Sigmoid colon (tissue), 7 donors: ENCODE measurements at regions of chr10 and their contacts with region 1.

Region 1: GRCh38 chr10:78211561-78212051 is 177.9 kb downstream of the RPS24 start:
- DNase-seq: no peak
- H3K4me3 ChIP-seq: no peak overlapping the region
- H3K27ac ChIP-seq: peak overlapping the region; percentile 41 to 64 (median 44)
- H3K4me1 ChIP-seq: peaks cover 0 to 39% (median 33%) of the 10 kb centered on the region in 4 donors
- H3K27me3 ChIP-seq: no peaks in the 10 kb centered on the region
- CTCF ChIP-seq: peak in 3 of 4 experiments; percentile 37 to 53 (median 50)
- EP300 ChIP-seq: no peak
- POLR2A ChIP-seq: no peak

Region 2: DNA sequence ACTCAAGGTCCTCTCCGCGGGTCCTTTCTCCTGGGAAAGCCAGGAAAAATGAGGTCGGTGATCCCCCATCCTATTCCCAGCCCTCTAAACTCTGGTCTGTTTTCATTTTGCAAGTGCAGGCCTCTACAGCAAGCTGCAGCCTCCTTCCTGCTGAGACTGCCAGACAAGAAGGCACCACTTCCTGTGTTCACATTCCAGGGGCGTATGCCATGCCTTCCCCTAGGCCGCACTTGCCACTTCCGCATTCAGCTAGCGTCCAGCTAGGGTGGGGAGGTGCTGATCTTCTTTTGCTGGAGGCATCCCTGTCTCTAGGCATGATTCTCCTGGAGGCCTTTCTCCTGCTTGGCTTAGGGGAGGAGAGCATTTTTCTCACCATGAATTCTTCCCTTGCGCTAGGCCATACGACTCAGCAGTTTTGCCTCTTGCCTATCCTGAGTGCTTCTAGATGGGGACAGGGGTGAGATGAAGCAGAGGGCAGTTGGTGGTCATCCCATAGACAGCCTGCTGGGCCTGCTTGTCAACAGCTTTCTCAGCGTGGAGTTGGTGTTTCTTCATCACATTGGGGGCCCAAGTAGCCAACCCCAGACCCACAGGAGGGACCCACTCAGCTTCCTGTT is 150.9 kb after region 1 on chr10:
- intact Hi-C with region 1: no loop called
- DNase-seq: no peak
- H3K4me3 ChIP-seq: no peak overlapping the region
- H3K27ac ChIP-seq: no peak overlapping the region
- H3K4me1 ChIP-seq: peaks cover 0 to 37% (median 26%) of the 10 kb centered on the region in 4 donors
- H3K27me3 ChIP-seq: no peaks in the 10 kb centered on the region
- CTCF ChIP-seq: no peak
- EP300 ChIP-seq: no peak
- POLR2A ChIP-seq: no peak

Region 3: DNA sequence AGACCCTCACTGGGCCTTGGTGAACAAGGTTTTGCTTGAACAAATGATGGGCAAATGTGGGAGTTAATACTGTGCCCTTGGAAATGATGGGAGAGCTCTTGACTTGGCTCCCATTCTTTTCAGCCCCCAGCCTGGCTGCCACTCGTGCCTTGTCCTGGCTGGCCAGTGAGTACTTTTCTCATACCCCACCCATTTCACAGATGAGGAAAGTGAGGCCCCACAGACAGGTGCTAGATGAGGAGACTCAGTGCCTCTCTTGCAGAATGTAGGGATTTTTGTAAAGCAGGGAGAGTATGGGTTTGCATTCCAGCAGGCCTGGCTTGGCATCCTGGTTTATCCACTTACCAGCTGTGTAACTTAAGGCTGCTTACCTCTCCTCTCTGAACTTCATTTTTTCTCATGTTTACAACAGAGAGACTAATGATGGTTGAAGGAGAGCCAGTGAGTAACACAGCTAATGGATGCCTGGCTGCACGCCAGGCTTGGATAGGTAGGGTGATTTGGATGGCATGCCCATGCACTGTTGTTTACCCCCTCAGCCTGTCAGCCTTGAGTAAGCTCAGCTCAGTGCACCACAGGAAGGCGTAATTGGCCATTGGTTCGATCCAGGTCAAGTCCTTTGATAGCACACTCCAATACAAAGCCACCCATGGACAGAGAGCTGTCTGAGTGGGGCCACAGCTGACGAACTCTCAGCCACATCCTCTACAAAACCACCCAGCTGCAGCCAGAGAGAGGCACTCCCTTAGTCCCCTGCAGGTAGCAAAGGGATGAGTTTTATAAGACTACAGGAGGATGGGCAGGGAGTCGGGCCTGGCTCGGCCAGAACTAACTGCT is 258.9 kb after region 1 on chr10:
- intact Hi-C with region 1: no loop called
- DNase-seq: no peak
- H3K4me3 ChIP-seq: no peak overlapping the region
- H3K27ac ChIP-seq: peak overlapping the region in 3 of 4 donors; percentile 79 to 90 (median 84)
- H3K4me1 ChIP-seq: peaks cover 0 to 38% (median 35%) of the 10 kb centered on the region in 4 donors
- H3K27me3 ChIP-seq: no peaks in the 10 kb centered on the region
- CTCF ChIP-seq: no peak
- EP300 ChIP-seq: no peak
- POLR2A ChIP-seq: no peak

Region 4: DNA sequence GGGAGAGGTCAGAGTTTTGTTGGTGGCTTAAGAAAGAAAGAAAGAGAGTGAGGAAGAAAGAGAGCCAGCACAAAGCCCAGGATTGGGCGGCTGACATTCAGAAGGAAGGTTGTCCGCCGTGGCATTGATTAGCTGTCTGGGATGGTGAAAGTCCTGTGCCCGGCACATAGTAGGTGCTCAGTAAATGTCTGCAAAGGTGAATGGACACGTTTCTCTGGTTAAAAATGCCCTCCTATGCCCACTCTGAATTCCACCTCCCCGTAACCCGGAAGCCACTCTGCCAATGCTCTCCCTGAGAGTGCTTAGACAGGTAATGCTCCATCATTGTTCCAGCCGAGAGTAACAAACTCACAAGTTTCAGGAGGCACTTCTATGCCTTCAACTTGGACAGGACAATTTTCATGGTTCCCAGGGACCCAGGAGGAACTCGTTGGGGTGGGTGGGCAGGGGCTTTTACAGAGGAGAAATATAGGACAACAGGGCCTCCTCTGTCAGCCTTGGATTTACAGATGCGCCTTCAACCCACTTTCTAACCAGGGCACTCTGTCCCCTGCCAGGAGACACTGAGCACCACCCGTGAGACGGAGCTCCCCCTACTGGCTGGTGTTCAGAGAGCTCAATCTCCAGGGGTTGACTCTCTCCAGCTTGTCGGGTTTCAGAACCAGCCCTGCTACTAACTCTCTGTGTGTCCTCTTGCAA is 445.7 kb after region 1 on chr10:
- intact Hi-C with region 1: loop called (anchors 2 kb)
- DNase-seq: peak; percentile 91
- H3K4me3 ChIP-seq: no peak overlapping the region
- H3K27ac ChIP-seq: peak overlapping the region in 3 of 4 donors; percentile 61 to 73 (median 70)
- H3K4me1 ChIP-seq: peaks cover 0 to 39% (median 18%) of the 10 kb centered on the region in 4 donors
- H3K27me3 ChIP-seq: no peaks in the 10 kb centered on the region
- CTCF ChIP-seq: peak; percentile 46 to 74 (median 60)
- EP300 ChIP-seq: no peak
- POLR2A ChIP-seq: no peak

Region 5: GRCh38 chr10:78756604-78757349 is 545.2 kb after region 1 on chr10:
- intact Hi-C with region 1: loop called (anchors 5 kb)
- DNase-seq: peak; percentile 95
- H3K4me3 ChIP-seq: no peak overlapping the region
- H3K27ac ChIP-seq: peak overlapping the region; percentile 45 to 74 (median 68)
- H3K4me1 ChIP-seq: peaks cover 0 to 23% (median 18%) of the 10 kb centered on the region in 4 donors
- H3K27me3 ChIP-seq: no peaks in the 10 kb centered on the region
- CTCF ChIP-seq: no peak
- EP300 ChIP-seq: peak in 2 of 4 donors; percentile 61 to 78
- POLR2A ChIP-seq: no peak

Region 6: DNA sequence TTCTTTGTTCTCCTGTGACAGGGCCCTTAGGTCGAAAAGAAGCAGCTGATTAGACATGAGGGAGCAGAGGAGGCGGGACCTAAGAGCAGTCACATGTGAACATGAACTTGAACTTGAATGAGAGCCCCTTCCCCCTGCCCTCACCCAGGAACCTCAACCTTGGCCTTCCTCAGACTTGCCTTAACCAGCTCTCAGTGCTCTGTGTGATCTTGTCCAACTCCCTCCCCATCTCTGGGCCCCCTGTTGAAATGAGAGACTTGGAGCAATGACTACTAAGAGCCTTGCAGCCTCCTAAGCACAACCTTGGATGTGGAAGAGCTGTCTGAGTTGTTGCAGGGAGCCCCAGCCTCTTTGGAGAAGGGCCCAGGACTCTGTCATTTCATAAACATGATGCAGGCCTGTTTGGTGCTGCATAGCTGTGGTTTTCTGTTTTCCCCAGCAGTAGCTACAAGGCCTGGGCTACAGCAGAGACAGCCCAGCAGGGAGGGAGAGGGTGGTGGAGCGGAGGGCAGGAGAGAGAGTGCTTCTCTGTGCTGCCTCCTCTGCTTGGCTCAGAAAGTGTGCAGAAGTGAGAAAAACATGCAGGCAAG is 733.2 kb after region 1 on chr10:
- intact Hi-C with region 1: loop called (anchors 10 kb)
- DNase-seq: peak; percentile 94
- H3K4me3 ChIP-seq: no peak overlapping the region
- H3K27ac ChIP-seq: peak overlapping the region; percentile 38 to 84 (median 81)
- H3K4me1 ChIP-seq: peaks cover 0 to 41% (median 39%) of the 10 kb centered on the region in 4 donors
- H3K27me3 ChIP-seq: no peaks in the 10 kb centered on the region
- CTCF ChIP-seq: no peak
- EP300 ChIP-seq: peak in 2 of 4 donors; percentile 41 to 49
- POLR2A ChIP-seq: no peak

Region 7: DNA sequence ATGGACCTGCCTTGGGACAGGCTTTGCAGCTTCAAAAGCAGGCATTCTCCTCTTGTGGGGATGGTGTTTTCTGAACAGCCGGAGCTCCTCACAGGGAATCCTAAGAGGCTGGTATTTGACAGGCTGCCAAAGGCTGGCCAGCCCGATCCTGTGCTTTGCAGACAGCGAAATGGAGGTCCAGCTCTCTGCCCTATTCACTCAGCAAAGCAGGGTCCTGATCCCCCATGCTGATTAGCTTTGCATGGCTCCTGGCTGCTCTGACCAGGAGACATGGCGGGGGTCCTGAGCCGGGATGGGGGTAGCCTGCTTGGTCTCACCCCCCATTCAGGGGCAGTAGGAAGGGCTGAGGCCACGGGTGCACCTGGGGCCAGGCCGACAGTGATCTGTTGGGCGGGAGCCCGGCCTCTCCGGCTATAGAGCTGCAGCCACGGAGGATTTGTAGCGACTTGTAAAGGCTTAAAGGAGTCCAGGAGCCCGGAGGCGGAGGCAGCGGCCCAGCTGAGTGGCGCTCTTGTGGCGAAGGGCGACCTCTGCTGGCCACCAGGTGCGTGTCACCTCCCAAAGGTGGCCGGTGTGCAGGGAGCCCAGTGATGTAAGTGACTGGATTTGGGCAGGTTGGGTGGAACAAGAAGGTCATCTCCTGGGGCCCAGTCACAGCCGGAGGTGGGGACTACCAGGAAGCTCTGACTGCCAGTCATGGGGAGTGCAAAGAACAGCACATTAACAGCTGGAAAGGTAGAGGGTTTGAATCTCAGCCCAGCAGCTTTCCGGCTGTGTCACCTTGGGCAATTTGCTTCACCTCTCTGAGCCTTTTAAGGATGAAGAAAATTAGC is 983.7 kb after region 1 on chr10:
- intact Hi-C with region 1: loop called (anchors 2 kb)
- DNase-seq: peak; percentile 95
- H3K4me3 ChIP-seq: no peak overlapping the region
- H3K27ac ChIP-seq: peak overlapping the region; percentile 78 to 86 (median 80)
- H3K4me1 ChIP-seq: peaks cover 0 to 51% (median 48%) of the 10 kb centered on the region in 4 donors
- H3K27me3 ChIP-seq: no peaks in the 10 kb centered on the region
- CTCF ChIP-seq: peak; percentile 92 to 97 (median 94)
- EP300 ChIP-seq: peak in 1 of 4 donors; percentile 17
- POLR2A ChIP-seq: no peak